CD4-positive, alpha-beta T cell (primary cell): ENCODE measurements at regions of chr2 and their contacts with region 1.

Region 1: DNA sequence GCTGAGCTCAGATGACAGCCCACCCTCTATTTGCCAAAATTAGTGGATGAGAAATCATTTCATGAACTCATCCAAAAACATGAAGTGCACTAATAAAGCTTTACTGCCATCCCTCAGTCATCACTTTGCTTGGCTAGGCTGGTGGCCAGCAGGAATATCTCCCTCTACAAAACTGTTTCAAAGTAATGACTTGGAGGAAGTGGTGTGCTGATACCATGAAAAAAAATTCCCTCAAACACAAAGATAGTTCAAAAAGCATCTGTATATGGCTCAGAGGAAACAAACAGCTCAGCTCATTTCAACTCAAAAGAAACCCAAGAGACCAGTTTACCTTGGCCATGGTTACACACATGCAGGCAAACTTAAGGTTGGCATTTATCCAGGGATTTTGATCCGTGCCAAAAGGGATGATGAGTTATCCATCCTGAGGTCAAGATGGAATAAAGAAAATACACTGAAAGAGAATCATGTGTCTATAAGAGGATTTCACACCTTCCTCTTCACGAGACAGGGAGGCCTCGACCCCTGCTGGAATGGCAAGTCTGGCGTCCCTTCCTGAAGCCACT is 18.4 kb upstream of the WIPF1 start:
- DNase-seq: peak in 3 of 14 experiments; percentile 40 to 55 (median 44)
- ATAC-seq: peak; percentile 67
- H3K4me3 ChIP-seq: no peak overlapping the region
- H3K4me3 Mint-ChIP-seq: peak overlapping the region; percentile 23
- H3K27ac ChIP-seq: peak overlapping the region in 1 of 2 donors; percentile 53
- H3K27ac Mint-ChIP-seq: peak overlapping the region; percentile 86
- H3K4me1 ChIP-seq: peaks cover 45% of the 10 kb centered on the region
- H3K4me1 Mint-ChIP-seq: peaks cover 97% of the 10 kb centered on the region
- H3K27me3 ChIP-seq: no peaks in the 10 kb centered on the region
- H3K27me3 Mint-ChIP-seq: no peaks in the 10 kb centered on the region
- CTCF ChIP-seq: no peak

Region 2: DNA sequence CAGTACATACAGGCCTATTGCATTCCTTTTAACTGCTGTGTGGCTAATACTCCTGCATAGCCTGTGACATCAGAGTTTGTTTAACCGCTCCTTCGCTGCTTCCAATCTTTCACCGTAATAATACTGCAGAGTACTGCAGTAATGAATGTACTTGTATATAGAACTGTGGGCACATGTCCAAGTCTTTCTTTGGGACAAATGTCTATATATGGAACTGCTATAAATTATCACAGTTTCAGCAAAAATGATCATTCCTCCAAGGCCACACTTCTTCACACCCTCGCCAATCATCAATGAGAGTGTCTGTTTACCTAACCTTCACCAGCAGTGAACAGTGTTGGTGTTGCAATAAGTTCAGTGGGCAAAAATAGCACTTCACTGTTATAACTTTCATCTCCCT is 881.2 kb before region 1 on chr2:
- CTCF ChIA-PET with region 1: no interaction called
- POLR2A ChIA-PET with region 1: no interaction called
- intact Hi-C with region 1: no loop called
- DNase-seq: no peak
- ATAC-seq: no peak
- H3K4me3 ChIP-seq: no peak overlapping the region
- H3K4me3 Mint-ChIP-seq: no peak overlapping the region
- H3K27ac ChIP-seq: no peak overlapping the region
- H3K27ac Mint-ChIP-seq: no peak overlapping the region
- H3K4me1 ChIP-seq: no peaks in the 10 kb centered on the region
- H3K4me1 Mint-ChIP-seq: no peaks in the 10 kb centered on the region
- H3K27me3 ChIP-seq: peaks cover 0 to 3% of the 10 kb centered on the region in 2 experiments
- H3K27me3 Mint-ChIP-seq: peaks cover 12% of the 10 kb centered on the region
- CTCF ChIP-seq: no peak

Region 3: GRCh38 chr2:174634130-174635014 is 18.4 kb after region 1 on chr2:
- CTCF ChIA-PET with region 1: interaction called, 4 read pairs
- POLR2A ChIA-PET with region 1: interaction called, 16 read pairs
- intact Hi-C with region 1: loop called in 1 of 2 experiments (anchors 2 kb)
- DNase-seq: peak in 13 of 14 experiments; percentile 11 to 80 (median 41)
- ATAC-seq: peak; percentile 67
- H3K4me3 ChIP-seq: peak overlapping the region; percentile 73
- H3K4me3 Mint-ChIP-seq: peak overlapping the region; percentile 94
- H3K27ac ChIP-seq: peak overlapping the region; percentile 77 to 79
- H3K27ac Mint-ChIP-seq: peak overlapping the region; percentile 95
- H3K4me1 ChIP-seq: peaks cover 32% of the 10 kb centered on the region
- H3K4me1 Mint-ChIP-seq: peaks cover 68% of the 10 kb centered on the region
- H3K27me3 ChIP-seq: no peaks in the 10 kb centered on the region
- H3K27me3 Mint-ChIP-seq: no peaks in the 10 kb centered on the region
- CTCF ChIP-seq: no peak

Region 4: DNA sequence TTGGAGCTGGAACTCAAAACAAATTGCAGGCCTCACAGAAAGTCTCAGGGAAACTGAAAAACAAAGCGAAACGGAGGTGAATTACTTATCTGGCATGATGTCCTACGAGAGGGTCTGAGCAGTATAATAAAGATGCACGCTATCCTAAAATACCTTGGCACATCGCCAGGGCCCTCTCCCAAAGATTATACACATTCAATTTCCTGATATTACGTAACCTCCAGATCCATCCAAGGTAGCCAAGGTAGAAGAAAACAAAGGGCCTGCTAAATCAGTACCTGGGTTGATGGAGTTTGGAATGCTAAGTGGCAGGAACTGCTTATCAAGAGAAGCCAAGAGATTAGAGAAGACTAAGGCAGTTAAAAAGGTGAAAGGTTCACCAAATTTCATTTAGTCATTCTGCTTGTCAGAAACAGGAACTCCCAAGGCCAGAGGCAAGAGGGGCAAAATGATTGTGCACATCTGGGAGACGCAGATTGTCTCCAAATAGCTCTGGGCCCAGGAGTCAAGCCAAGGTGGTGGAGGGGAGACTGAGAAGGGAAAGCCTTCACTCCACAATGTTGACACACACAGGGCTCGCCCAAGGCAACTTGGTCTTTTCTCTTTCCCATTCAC is 802.4 kb after region 1 on chr2:
- CTCF ChIA-PET with region 1: no interaction called
- POLR2A ChIA-PET with region 1: no interaction called
- intact Hi-C with region 1: no loop called
- DNase-seq: no peak
- ATAC-seq: no peak
- H3K4me3 ChIP-seq: no peak overlapping the region
- H3K4me3 Mint-ChIP-seq: no peak overlapping the region
- H3K27ac ChIP-seq: no peak overlapping the region
- H3K27ac Mint-ChIP-seq: no peak overlapping the region
- H3K4me1 ChIP-seq: no peaks in the 10 kb centered on the region
- H3K4me1 Mint-ChIP-seq: no peaks in the 10 kb centered on the region
- H3K27me3 ChIP-seq: peaks cover 0 to 3% of the 10 kb centered on the region in 2 experiments
- H3K27me3 Mint-ChIP-seq: peaks cover 30% of the 10 kb centered on the region
- CTCF ChIP-seq: no peak

Region 5: DNA sequence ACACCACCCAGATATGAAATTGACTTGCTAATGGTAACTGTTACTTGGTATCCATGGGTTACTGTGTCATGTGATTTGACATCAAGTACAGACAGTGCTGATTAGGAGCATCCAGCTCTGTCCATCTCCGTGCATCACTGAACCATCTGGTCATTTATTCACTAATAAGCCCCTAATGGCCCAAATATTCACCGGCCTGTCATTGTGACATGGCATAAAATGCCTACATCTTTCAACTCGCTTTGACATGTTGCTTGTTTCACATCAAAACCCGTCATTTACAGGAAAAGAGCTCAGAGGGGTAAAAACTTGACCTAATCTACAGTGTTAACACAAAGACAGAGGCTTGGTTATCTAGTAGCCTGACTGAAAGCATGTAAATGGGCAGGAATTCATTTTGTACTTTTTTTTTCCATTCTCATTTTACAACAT is 874.4 kb after region 1 on chr2:
- CTCF ChIA-PET with region 1: no interaction called
- POLR2A ChIA-PET with region 1: no interaction called
- intact Hi-C with region 1: no loop called
- DNase-seq: no peak
- ATAC-seq: no peak
- H3K4me3 ChIP-seq: no peak overlapping the region
- H3K4me3 Mint-ChIP-seq: no peak overlapping the region
- H3K27ac ChIP-seq: no peak overlapping the region
- H3K27ac Mint-ChIP-seq: no peak overlapping the region
- H3K4me1 ChIP-seq: no peaks in the 10 kb centered on the region
- H3K4me1 Mint-ChIP-seq: no peaks in the 10 kb centered on the region
- H3K27me3 ChIP-seq: peaks cover 0 to 4% of the 10 kb centered on the region in 2 experiments
- H3K27me3 Mint-ChIP-seq: peaks cover 5% of the 10 kb centered on the region
- CTCF ChIP-seq: no peak

Region 6: DNA sequence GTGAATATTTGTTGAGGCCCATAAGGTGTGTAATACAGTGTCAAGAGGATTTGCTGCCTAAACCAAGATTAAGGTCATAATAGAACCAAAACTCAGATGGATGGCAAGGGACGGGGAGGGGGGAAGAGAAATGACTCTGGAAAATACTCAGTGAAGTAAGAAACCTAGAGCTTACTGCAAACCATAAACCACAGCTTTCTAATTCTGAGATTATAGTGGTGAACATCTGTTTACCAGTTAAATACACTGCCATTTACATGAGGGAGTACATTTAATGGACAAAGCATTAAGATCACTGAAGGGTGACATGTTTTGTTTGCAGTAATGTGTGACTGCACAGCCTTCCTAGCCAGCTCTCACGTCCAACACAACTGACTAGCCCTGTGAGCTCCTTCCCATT is 1448.0 kb after region 1 on chr2:
- CTCF ChIA-PET with region 1: no interaction called
- POLR2A ChIA-PET with region 1: no interaction called
- intact Hi-C with region 1: no loop called
- DNase-seq: no peak
- ATAC-seq: no peak
- H3K4me3 ChIP-seq: no peak overlapping the region
- H3K4me3 Mint-ChIP-seq: no peak overlapping the region
- H3K27ac ChIP-seq: no peak overlapping the region
- H3K27ac Mint-ChIP-seq: no peak overlapping the region
- H3K4me1 ChIP-seq: peaks cover 17% of the 10 kb centered on the region
- H3K4me1 Mint-ChIP-seq: peaks cover 6% of the 10 kb centered on the region
- H3K27me3 ChIP-seq: peaks cover 34 to 63% of the 10 kb centered on the region in 2 experiments
- H3K27me3 Mint-ChIP-seq: peaks cover 83% of the 10 kb centered on the region
- CTCF ChIP-seq: no peak